A549 (cell line): ENCODE measurements at regions of chr5 and their contacts with region 1.

Region 1: DNA sequence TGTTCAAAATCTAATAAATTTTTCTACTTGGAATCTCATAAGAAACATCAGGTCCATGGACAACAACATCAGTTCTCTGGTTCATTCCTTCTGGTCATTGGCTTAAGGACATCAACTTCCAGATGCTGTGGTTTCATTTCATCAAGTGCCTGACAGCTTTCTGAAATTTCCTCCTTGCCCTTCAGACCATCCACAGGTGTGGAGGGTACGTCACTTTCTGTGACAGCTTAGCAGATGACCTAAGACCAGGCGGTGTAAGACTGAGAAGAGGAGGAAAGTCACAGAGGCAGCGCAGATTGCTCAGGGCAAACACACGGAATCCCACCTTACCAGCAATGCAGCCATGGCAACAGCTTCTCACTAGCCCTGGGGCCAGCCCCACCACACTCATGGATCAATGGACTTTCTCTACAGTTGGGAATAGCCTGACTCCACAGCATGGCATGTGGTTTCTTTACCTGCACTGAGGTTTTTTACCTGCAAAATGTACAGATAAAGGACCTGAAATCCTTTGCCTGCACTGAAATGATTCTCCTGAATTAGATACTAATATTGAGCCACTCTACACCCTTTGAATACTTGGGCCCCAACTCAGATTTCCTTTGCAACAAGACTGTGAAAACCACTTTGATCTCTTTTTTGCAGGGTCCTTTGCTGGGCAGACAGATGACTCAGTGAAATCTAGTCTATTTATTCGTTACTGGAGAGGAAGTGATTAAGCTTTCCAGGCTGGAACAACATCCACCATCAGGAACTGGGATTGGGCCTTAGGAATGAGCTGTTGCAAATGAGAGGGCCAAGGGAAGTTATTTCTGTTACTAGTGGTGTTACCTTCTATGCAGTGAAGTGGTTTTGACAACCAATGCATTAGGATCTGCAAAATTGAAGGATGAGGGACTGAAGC is 26.9 kb downstream of the TICAM2 start:
- DNase-seq: no peak
- ATAC-seq: no peak
- H3K4me3 ChIP-seq: no peak overlapping the region
- H3K27ac ChIP-seq: no peak overlapping the region
- H3K4me1 ChIP-seq: peaks cover 10% of the 10 kb centered on the region; the same call in 2 of the 3 replicates
- CTCF ChIP-seq: no peak
- EP300 ChIP-seq: no peak
- POLR2A ChIP-seq: no peak
- RAD21 ChIP-seq: no peak

Region 2: GRCh38 chr5:115309751-115310370 is 265.6 kb before region 1 on chr5:
- CTCF ChIA-PET with region 1: interaction called, 156 read pairs
- POLR2A ChIA-PET with region 1: no interaction called
- DNase-seq: peak in 1 of 2 experiments; percentile 38
- ATAC-seq: peak in 1 of 2 experiments; percentile 74; a peak in 3 of 6 replicates
- H3K4me3 ChIP-seq: no peak overlapping the region
- H3K27ac ChIP-seq: no peak overlapping the region
- H3K4me1 ChIP-seq: no peaks in the 10 kb centered on the region
- CTCF ChIP-seq: peak; percentile 78
- EP300 ChIP-seq: no peak
- POLR2A ChIP-seq: no peak
- RAD21 ChIP-seq: peak; percentile 86 to 94

Region 3: GRCh38 chr5:115377468-115378217 is 197.8 kb before region 1 on chr5:
- CTCF ChIA-PET with region 1: interaction called, 20 read pairs
- POLR2A ChIA-PET with region 1: no interaction called
- DNase-seq: peak in 1 of 2 experiments; percentile 22
- ATAC-seq: peak; percentile 46 to 71; a peak in 3 of 6 replicates
- H3K4me3 ChIP-seq: no peak overlapping the region
- H3K27ac ChIP-seq: 0 out of 6 replicates have a peak overlapping the region, but pooled peaks of 1 of the 2 experiments have one; percentile 1
- H3K4me1 ChIP-seq: peaks cover 11% of the 10 kb centered on the region; the same call in 2 of the 3 replicates
- CTCF ChIP-seq: peak; percentile 32; the same call in 2 of the 3 replicates
- EP300 ChIP-seq: no peak
- POLR2A ChIP-seq: no peak
- RAD21 ChIP-seq: peak; percentile 52 to 53; a peak in 4 of 5 replicates

Region 4: DNA sequence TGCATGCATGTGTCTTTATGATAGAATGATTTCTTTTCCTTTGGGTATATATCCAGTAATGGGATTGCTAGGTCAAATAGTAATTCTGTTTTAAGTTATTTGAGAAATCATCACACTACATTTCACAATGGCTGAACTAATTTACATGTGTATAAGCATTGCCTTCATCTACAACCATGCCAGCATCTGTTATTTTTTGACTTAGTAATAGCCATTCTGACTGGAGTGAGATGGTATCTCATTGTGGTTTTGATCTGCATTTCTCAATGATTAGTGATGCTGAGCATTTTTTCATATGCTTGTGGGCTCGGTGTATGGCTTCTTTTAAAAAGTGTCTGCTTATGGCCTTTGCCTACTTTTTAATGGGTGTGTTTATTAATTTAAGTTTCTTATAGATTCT is 176.7 kb before region 1 on chr5:
- CTCF ChIA-PET with region 1: no interaction called
- POLR2A ChIA-PET with region 1: no interaction called
- DNase-seq: no peak
- ATAC-seq: no peak
- H3K4me3 ChIP-seq: no peak overlapping the region
- H3K27ac ChIP-seq: no peak overlapping the region
- H3K4me1 ChIP-seq: 0 out of 3 replicates have a peak, but pooled peaks cover 3% of the 10 kb centered on the region
- CTCF ChIP-seq: no peak
- EP300 ChIP-seq: no peak
- POLR2A ChIP-seq: no peak
- RAD21 ChIP-seq: no peak

Region 5: DNA sequence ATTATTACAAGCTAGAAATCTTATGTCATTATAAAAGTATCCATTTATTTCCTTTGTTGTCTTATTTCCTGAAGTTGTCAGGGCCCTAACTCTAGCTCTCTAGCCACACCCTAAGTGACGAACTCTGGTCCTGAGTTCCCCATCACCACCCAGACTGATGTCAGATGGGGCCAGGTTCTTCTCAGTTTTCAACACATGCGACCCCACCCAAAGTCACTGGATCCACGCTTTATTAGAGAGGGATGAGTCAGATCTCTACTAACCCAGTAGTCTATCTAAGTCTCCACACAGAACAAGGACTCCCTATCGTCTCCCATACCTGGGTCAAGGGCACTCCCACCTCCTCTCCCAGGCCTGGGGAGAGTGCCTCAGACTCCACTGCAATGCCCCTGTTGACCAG is 24.0 kb before region 1 on chr5:
- CTCF ChIA-PET with region 1: interaction called, 10 read pairs
- POLR2A ChIA-PET with region 1: no interaction called
- DNase-seq: peak in 1 of 2 experiments; percentile 29
- ATAC-seq: peak in 1 of 2 experiments; percentile 41; a peak in 1 of 6 replicates
- H3K4me3 ChIP-seq: no peak overlapping the region
- H3K27ac ChIP-seq: no peak overlapping the region
- H3K4me1 ChIP-seq: 0 out of 3 replicates have a peak, but pooled peaks cover 6% of the 10 kb centered on the region
- CTCF ChIP-seq: no peak
- EP300 ChIP-seq: no peak
- POLR2A ChIP-seq: no peak
- RAD21 ChIP-seq: no peak

Region 6: GRCh38 chr5:115588640-115589039 is 13.2 kb after region 1 on chr5:
- CTCF ChIA-PET with region 1: interaction called, 29 read pairs
- POLR2A ChIA-PET with region 1: interaction called, 3 read pairs
- DNase-seq: no peak
- ATAC-seq: no peak
- H3K4me3 ChIP-seq: no peak overlapping the region
- H3K27ac ChIP-seq: no peak overlapping the region
- H3K4me1 ChIP-seq: no peaks in the 10 kb centered on the region
- CTCF ChIP-seq: no peak
- EP300 ChIP-seq: no peak
- POLR2A ChIP-seq: no peak
- RAD21 ChIP-seq: no peak